B cell (primary cell): ENCODE measurements at regions of chr19 and their contacts with region 1.

Region 1: GRCh38 chr19:2328401-2329148 is at the starts of genes LSM7 and SPPL2B:
- DNase-seq: peak; percentile 95
- ATAC-seq: peak; percentile 42
- H3K4me3 ChIP-seq: peak within 1 kb of the TSS; percentile 66 to 97 (median 92)
- H3K4me3 Mint-ChIP-seq: peak within 1 kb of the TSS; percentile 96
- H3K27ac ChIP-seq: peak within 1 kb of the TSS; percentile 71 to 90
- H3K27ac Mint-ChIP-seq: peak within 1 kb of the TSS; percentile 98
- H3K4me1 ChIP-seq: peaks cover 81 to 92% of the 10 kb centered on the region in 2 donors
- H3K4me1 Mint-ChIP-seq: peaks cover 81% of the 10 kb centered on the region
- H3K27me3 ChIP-seq: no peaks in the 10 kb centered on the region
- H3K27me3 Mint-ChIP-seq: no peaks in the 10 kb centered on the region
- CTCF ChIP-seq: no peak
- total RNA-seq, gene LSM7: 180 and 201 TPM in 2 replicates
- total RNA-seq, gene SPPL2B: 479 and 511 TPM in 2 replicates

Region 2: DNA sequence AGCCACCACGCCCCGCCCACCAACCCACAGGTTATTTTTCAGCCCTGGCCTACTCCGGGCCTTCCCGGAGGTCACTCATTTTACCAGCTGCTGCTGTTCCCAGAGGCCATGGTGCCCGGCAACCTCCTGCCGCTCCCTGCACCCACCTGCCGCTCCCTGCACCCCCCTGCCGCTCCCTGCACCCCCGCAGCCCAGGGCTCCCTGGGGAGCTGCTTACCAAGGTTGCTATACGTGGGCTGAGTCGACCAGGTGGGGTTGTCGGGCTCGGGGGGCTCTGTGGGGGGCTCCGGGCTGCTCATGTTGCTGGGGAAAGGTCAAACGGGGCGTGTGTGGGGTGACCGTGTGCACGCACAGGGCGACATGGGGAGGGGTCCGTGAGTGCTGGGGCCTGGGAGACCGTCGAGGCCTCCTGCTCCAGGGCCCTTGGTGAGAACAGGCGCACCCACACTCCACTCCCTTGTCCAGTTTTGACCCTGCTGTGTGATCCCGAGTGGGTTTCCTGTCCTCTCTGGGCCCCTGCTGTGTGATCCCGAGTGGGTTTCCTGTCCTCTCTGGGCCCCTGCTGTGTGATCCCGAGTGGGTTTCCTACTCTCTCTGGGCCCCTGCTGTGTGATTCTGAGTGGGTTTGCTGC is 47.8 kb before region 1 on chr19:
- CTCF ChIA-PET with region 1: no interaction called
- POLR2A ChIA-PET with region 1: no interaction called
- intact Hi-C with region 1: no loop called
- DNase-seq: no peak
- ATAC-seq: no peak
- H3K4me3 ChIP-seq: no peak overlapping the region
- H3K4me3 Mint-ChIP-seq: no peak overlapping the region
- H3K27ac ChIP-seq: no peak overlapping the region
- H3K27ac Mint-ChIP-seq: no peak overlapping the region
- H3K4me1 ChIP-seq: peaks cover 16 to 35% of the 10 kb centered on the region in 2 donors
- H3K4me1 Mint-ChIP-seq: peaks cover 28% of the 10 kb centered on the region
- H3K27me3 ChIP-seq: no peaks in the 10 kb centered on the region
- H3K27me3 Mint-ChIP-seq: no peaks in the 10 kb centered on the region
- CTCF ChIP-seq: no peak

Region 3: GRCh38 chr19:2391118-2391725 is 62.6 kb after region 1 on chr19:
- CTCF ChIA-PET with region 1: interaction called, 24 read pairs
- POLR2A ChIA-PET with region 1: interaction called, 8 read pairs
- intact Hi-C with region 1: loop called (anchors 1 kb)
- DNase-seq: peak; percentile 82
- ATAC-seq: peak; percentile 51
- H3K4me3 ChIP-seq: no peak overlapping the region
- H3K4me3 Mint-ChIP-seq: peak overlapping the region; percentile 61
- H3K27ac ChIP-seq: no peak overlapping the region
- H3K27ac Mint-ChIP-seq: peak overlapping the region; percentile 70
- H3K4me1 ChIP-seq: peaks cover 16 to 31% of the 10 kb centered on the region in 2 donors
- H3K4me1 Mint-ChIP-seq: peaks cover 32% of the 10 kb centered on the region
- H3K27me3 ChIP-seq: no peaks in the 10 kb centered on the region
- H3K27me3 Mint-ChIP-seq: no peaks in the 10 kb centered on the region
- CTCF ChIP-seq: peak; percentile 92